B cell (primary cell): ENCODE measurements at regions of chr7 and their contacts with region 1.

Region 1: DNA sequence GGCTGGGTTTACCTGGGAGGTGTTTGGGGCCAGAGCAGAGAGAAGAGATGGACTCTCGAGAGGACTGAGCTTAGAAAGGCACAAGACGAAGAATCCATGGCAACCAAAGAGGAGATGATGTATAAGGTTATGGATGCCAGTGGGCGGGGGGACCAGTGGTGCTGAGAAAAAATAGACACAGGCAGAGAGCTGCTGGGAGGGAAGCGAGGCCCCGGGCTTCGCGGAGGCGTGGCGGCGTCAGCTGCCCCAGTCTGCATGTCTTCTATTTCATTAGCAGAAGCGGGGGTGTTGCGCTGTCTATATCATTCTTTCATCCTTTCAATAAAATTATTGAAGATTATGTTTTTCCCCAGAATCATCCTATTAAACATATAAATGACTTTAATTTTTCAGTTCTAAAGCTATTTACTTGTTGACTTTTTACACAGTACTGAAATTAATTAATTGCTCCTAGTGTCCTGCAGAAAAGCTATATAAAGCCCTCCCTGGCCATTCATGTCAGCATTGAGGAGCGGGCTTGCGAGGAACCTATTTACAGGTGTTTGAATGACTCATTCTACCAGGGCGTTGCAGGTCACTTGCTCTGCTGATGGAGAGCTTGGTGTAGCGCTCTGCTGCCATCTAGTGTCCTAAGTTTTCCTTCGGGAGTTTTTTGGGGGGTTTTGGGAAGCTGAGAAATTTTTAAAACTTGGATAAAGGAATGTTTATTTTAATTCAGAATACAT is 42.9 kb upstream of the BHLHA15 start:
- DNase-seq: peak; percentile 83
- ATAC-seq: peak; percentile 75
- H3K4me3 ChIP-seq: no peak overlapping the region
- H3K4me3 Mint-ChIP-seq: no peak overlapping the region
- H3K27ac ChIP-seq: no peak overlapping the region
- H3K27ac Mint-ChIP-seq: no peak overlapping the region
- H3K4me1 ChIP-seq: peaks cover 0 to 6% of the 10 kb centered on the region in 2 donors
- H3K4me1 Mint-ChIP-seq: peaks cover 14% of the 10 kb centered on the region
- H3K27me3 ChIP-seq: peaks cover 0 to 4% (median 0%) of the 10 kb centered on the region in 4 experiments
- H3K27me3 Mint-ChIP-seq: peaks cover 4% of the 10 kb centered on the region
- CTCF ChIP-seq: peak; percentile 95

Region 2: GRCh38 chr7:97104719-97105238 is 1063.6 kb before region 1 on chr7:
- CTCF ChIA-PET with region 1: interaction called, 6 read pairs
- POLR2A ChIA-PET with region 1: no interaction called
- intact Hi-C with region 1: loop called (anchors 10 kb)
- DNase-seq: peak; percentile 82
- ATAC-seq: peak; percentile 92
- H3K4me3 ChIP-seq: no peak overlapping the region
- H3K4me3 Mint-ChIP-seq: no peak overlapping the region
- H3K27ac ChIP-seq: no peak overlapping the region
- H3K27ac Mint-ChIP-seq: no peak overlapping the region
- H3K4me1 ChIP-seq: peaks cover 3% of the 10 kb centered on the region in 2 donors
- H3K4me1 Mint-ChIP-seq: no peaks in the 10 kb centered on the region
- H3K27me3 ChIP-seq: peaks cover 0 to 7% (median 3%) of the 10 kb centered on the region in 4 experiments
- H3K27me3 Mint-ChIP-seq: peaks cover 27% of the 10 kb centered on the region
- CTCF ChIP-seq: peak; percentile 92

Region 3: DNA sequence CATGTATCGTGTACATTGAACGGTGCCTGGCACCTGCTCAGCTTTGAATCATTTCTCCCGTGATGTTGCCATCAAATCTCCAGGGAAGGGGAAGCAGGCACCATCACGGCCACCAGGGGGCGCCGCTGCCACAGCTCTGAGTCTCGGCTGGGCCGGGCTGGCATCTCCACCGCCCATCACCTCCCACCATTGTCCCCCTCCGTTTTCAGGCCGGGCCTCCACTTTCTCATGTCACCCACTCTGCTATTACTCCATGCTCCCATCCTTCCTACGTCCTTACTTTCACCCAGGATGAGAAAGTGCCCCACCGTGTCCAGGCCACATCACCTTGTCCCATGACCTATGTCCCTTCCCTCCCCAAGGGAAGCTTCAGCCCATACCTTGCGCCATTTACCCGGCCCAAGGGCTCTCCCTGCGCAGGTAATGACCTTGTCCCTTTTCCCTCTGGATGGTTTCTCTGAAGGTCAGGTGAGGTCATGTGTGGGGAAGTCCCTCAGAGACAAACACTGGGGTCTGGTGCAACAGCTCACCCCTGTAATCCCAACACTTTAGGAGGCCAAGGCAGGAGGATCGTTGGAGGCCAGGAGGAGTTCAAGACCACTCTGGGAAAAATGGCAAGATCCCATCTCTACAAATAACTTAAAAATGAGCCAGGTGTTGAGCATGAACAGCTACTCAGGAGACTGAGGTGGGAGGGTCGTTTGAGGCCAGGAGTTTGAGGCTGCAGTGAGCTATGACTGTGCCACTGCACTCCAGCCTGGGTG is 146.6 kb before region 1 on chr7:
- CTCF ChIA-PET with region 1: interaction called, 383 read pairs
- POLR2A ChIA-PET with region 1: interaction called, 5 read pairs
- intact Hi-C with region 1: loop called (anchors 1 kb)
- DNase-seq: peak; percentile 81
- ATAC-seq: peak; percentile 75
- H3K4me3 ChIP-seq: no peak overlapping the region
- H3K4me3 Mint-ChIP-seq: no peak overlapping the region
- H3K27ac ChIP-seq: no peak overlapping the region
- H3K27ac Mint-ChIP-seq: peak overlapping the region; percentile 34
- H3K4me1 ChIP-seq: no peaks in the 10 kb centered on the region
- H3K4me1 Mint-ChIP-seq: peaks cover 4% of the 10 kb centered on the region
- H3K27me3 ChIP-seq: peaks cover 0 to 25% (median 1%) of the 10 kb centered on the region in 4 experiments
- H3K27me3 Mint-ChIP-seq: peaks cover 23% of the 10 kb centered on the region
- CTCF ChIP-seq: peak; percentile 90

Region 4: DNA sequence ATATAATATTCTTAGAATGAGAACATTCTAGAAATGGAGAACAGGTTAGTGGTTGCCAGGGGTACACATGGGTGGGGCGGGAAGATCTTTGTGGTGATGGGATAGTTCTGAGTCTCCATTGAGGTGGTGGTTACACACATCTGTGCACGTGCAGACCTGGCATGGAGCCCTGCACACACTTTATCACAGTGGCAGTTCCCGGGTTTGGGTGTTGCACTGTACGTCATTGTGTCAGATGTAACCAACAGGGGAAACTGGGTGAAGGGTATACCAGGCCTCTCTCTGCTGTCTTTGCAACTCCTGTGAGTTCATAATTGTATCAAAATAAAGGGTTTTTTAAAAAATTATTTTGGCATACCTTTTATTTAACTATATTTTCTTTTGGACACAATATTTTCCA is 10.6 kb before region 1 on chr7:
- CTCF ChIA-PET with region 1: interaction called, 18 read pairs
- POLR2A ChIA-PET with region 1: no interaction called
- intact Hi-C with region 1: no loop called
- DNase-seq: no peak
- ATAC-seq: no peak
- H3K4me3 ChIP-seq: no peak overlapping the region
- H3K4me3 Mint-ChIP-seq: no peak overlapping the region
- H3K27ac ChIP-seq: no peak overlapping the region
- H3K27ac Mint-ChIP-seq: no peak overlapping the region
- H3K4me1 ChIP-seq: peaks cover 2 to 3% of the 10 kb centered on the region in 2 donors
- H3K4me1 Mint-ChIP-seq: peaks cover 2% of the 10 kb centered on the region
- H3K27me3 ChIP-seq: peaks cover 0 to 2% (median under 1%) of the 10 kb centered on the region in 4 experiments
- H3K27me3 Mint-ChIP-seq: no peaks in the 10 kb centered on the region
- CTCF ChIP-seq: no peak

Region 5: DNA sequence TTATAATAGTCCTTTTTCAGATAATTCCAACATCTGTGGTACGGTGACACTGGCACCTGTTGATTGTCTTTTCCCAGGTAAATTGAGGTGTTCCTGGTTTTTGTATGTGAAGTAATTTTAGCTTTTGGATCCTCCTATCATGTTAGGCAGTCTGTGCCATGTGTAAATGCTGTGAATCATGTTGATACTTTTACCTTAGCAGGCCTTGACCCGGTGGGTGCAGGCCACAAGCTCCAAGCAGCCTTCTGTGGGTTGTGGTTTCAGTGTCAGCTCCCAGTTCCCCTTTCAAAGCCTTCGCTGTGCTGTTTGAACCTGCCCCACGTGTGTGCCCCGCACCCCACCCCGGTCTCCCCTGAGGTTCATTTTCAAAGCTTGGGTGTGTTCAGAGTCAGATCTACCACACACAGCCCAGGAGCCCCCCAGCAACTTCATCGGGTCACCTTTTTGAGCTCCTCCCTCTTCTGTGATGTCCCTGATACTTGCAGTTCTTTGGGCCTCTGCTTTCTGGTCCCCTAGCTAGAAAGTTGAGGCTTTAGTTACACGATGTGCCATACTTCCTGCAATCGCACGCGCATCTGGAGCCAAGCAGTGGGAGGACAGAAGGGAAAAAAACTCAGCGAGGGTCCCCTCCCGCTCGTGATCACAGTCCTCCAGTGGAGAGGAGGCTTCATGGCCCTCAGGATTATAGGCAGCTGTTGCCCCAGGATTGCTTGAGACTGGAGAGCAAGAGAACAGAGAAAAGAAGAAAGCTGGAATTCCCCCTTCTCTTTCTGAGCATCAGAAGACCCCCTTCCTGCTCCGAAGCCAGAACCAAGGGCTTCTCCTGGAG is 34.2 kb after region 1 on chr7:
- CTCF ChIA-PET with region 1: interaction called, 39 read pairs
- POLR2A ChIA-PET with region 1: no interaction called
- intact Hi-C with region 1: loop called (anchors 2 kb)
- DNase-seq: peak; percentile 91
- ATAC-seq: peak; percentile 90
- H3K4me3 ChIP-seq: peak overlapping the region in 4 of 5 experiments; percentile 9 to 55 (median 40)
- H3K4me3 Mint-ChIP-seq: peak overlapping the region; percentile 88
- H3K27ac ChIP-seq: peak overlapping the region in 1 of 2 donors; percentile 41
- H3K27ac Mint-ChIP-seq: peak overlapping the region; percentile 75
- H3K4me1 ChIP-seq: peaks cover 45 to 54% of the 10 kb centered on the region in 2 donors
- H3K4me1 Mint-ChIP-seq: peaks cover 53% of the 10 kb centered on the region
- H3K27me3 ChIP-seq: peaks cover 0 to 16% (median 6%) of the 10 kb centered on the region in 4 experiments
- H3K27me3 Mint-ChIP-seq: peaks cover 16% of the 10 kb centered on the region
- CTCF ChIP-seq: no peak

Region 6: GRCh38 chr7:98400542-98401340 is 232.4 kb after region 1 on chr7 and contains the start of gene BAIAP2L1:
- CTCF ChIA-PET with region 1: interaction called, 16 read pairs
- POLR2A ChIA-PET with region 1: no interaction called
- intact Hi-C with region 1: no loop called
- DNase-seq: peak; percentile 87
- ATAC-seq: peak; percentile 95
- H3K4me3 ChIP-seq: peak within 1 kb of the TSS in 3 of 5 experiments; percentile 42 to 53 (median 53)
- H3K4me3 Mint-ChIP-seq: peak within 1 kb of the TSS; percentile 73
- H3K27ac ChIP-seq: no peak within 1 kb of the TSS
- H3K27ac Mint-ChIP-seq: peak within 1 kb of the TSS; percentile 15
- H3K4me1 ChIP-seq: peaks cover 7 to 14% of the 10 kb centered on the region in 2 donors
- H3K4me1 Mint-ChIP-seq: peaks cover 20% of the 10 kb centered on the region
- H3K27me3 ChIP-seq: peaks cover 0 to 23% (median 12%) of the 10 kb centered on the region in 4 experiments
- H3K27me3 Mint-ChIP-seq: peaks cover 32% of the 10 kb centered on the region
- CTCF ChIP-seq: no peak
- total RNA-seq, gene BAIAP2L1: 2.7 and 3.7 TPM in 2 replicates

Region 7: DNA sequence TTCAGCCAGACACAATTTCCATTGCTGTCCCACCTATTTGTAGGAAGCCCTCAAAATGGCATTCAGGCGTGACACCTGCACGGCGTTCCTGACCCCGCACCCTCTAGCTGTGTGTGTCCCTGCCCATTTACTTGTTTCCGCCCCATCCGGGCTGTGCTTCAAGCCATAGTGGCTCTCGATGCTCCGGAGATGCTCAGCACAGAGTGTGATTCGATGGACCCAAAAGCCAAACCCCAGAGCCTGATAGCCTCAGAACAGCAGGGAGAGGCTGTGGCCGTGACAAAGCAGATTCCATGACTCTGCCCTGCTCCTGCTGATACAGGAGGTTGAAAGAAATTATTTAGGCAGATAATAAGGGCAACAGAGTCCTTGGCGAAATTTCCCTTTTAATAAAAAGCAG is 1253.8 kb after region 1 on chr7:
- CTCF ChIA-PET with region 1: no interaction called
- POLR2A ChIA-PET with region 1: no interaction called
- intact Hi-C with region 1: no loop called
- DNase-seq: no peak
- ATAC-seq: no peak
- H3K4me3 ChIP-seq: no peak overlapping the region
- H3K4me3 Mint-ChIP-seq: no peak overlapping the region
- H3K27ac ChIP-seq: no peak overlapping the region
- H3K27ac Mint-ChIP-seq: no peak overlapping the region
- H3K4me1 ChIP-seq: no peaks in the 10 kb centered on the region
- H3K4me1 Mint-ChIP-seq: no peaks in the 10 kb centered on the region
- H3K27me3 ChIP-seq: no peaks in the 10 kb centered on the region
- H3K27me3 Mint-ChIP-seq: no peaks in the 10 kb centered on the region
- CTCF ChIP-seq: no peak